ENCODE measurements at regions of chr2 and their contacts with region 1.

Region 1: GRCh38 chr2:27356382-27357181 is at the start of gene GTF3C2:
- DNase-seq: peak; percentile 98
- H3K4me3 ChIP-seq: peak within 1 kb of the TSS; percentile 40 to 90 (median 63)
- H3K27ac ChIP-seq: peak within 1 kb of the TSS; percentile 83
- H3K4me1 ChIP-seq: peaks cover 16% of the 10 kb centered on the region
- H3K27me3 ChIP-seq: no peaks in the 10 kb centered on the region
- CTCF ChIP-seq: no peak
- POLR2A ChIP-seq: no peak
- total RNA-seq, gene GTF3C2: 57.4 and 63.2 TPM in 2 replicates

Region 2: DNA sequence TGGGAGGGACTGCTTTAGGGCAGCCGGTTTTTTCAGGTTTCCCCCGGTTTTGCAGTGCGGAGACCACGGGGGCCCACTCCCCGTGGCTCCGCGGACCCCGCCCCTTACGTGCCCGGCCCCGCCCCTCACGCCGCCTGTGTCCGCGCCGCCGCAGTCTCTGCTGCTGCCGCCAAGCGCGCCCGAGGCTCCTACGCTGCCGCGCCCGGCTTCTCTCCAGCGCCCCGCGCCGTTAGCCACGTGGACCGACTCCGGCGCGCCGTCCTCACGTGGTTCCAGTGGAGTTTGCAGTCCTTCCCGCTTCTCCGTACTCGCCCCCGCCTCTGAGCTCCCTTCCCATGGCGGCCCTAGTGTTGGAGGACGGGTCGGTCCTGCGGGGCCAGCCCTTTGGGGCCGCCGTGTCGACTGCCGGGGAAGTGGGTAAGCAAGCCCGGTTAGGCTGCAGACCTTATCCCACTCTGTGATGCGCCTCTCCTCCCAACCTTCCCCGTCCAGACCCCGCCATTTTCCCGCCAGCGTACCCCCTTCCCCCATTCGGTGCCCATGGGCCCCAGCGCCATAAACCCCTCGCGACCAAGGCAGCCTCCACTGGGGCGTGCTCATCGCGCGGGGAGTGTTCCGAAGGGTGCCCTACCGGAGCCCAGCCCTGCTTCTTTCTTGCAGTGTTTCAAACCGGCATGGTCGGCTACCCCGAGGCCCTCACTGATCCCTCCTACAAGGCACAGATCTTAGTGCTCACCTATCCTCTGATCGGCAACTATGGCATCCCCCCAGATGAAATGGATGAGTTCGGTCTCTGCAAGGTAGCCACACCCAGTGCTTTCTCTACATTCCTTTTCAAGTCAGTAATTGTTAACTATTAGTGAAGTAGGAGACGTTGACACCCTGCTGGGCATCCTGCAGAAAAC is 139.1 kb before region 1 on chr2 and contains the start of gene CAD:
- CTCF ChIA-PET with region 1: no interaction called
- POLR2A ChIA-PET with region 1: no interaction called
- dilution Hi-C with region 1: no loop called
- intact Hi-C with region 1: loop called (anchors 2 kb)
- DNase-seq: peak; percentile 93
- H3K4me3 ChIP-seq: peak within 1 kb of the TSS; percentile 69 to 86 (median 75)
- H3K27ac ChIP-seq: peak within 1 kb of the TSS; percentile 54
- H3K4me1 ChIP-seq: peaks cover 25% of the 10 kb centered on the region
- H3K27me3 ChIP-seq: no peaks in the 10 kb centered on the region
- CTCF ChIP-seq: peak in 1 of 2 donors; percentile 32
- POLR2A ChIP-seq: peak; percentile 85
- total RNA-seq, gene CAD: 81.0 and 91.4 TPM in 2 replicates

Region 3: GRCh38 chr2:27322766-27323595 is 33.6 kb before region 1 on chr2 and contains the start of gene MPV17:
- CTCF ChIA-PET with region 1: interaction called, 5 read pairs
- POLR2A ChIA-PET with region 1: interaction called, 4 read pairs
- dilution Hi-C with region 1: no loop called
- intact Hi-C with region 1: loop called (anchors 1 kb)
- DNase-seq: peak; percentile 90
- H3K4me3 ChIP-seq: peak within 1 kb of the TSS; percentile 70 to 91 (median 90)
- H3K27ac ChIP-seq: peak within 1 kb of the TSS; percentile 95
- H3K4me1 ChIP-seq: peaks cover 26% of the 10 kb centered on the region
- H3K27me3 ChIP-seq: no peaks in the 10 kb centered on the region
- CTCF ChIP-seq: no peak
- POLR2A ChIP-seq: peak; percentile 98
- total RNA-seq, gene MPV17: 66.5 and 74.7 TPM in 2 replicates

Region 4: DNA sequence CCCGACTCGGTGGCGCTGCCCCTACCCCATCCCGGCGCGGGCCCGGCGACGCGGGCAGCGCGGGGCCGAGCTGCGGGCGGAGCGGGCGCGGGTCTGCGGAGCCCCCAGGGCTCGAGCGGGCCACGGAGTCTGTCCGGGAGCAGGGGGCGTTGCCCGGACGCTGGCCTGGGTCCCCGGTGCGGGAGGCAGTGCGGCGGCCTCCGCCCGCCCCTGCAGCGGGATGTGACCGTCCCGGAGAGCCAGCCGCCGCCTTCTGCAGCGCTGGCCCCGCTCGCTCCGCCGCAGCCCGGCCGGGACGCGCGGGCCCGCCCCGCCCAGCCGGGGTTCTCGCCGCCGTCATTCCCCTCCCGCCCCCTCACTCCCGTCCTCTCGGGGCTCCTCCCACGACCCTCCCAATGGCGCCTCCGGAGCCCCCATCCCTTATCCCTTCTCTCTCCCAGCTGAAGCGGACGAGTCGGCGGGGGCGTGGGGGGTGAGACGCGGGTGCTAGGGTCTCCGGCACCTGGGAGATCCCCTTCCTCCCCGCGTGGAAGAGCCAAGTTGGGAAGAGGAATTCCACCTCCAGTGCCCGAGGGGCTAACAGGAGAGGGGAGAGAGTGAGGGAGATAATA is 138.5 kb after region 1 on chr2 and contains the start of gene FNDC4:
- CTCF ChIA-PET with region 1: no interaction called
- POLR2A ChIA-PET with region 1: no interaction called
- dilution Hi-C with region 1: no loop called
- intact Hi-C with region 1: no loop called
- DNase-seq: peak; percentile 37
- H3K4me3 ChIP-seq: peak within 1 kb of the TSS; percentile 78 to 89 (median 85)
- H3K27ac ChIP-seq: peak within 1 kb of the TSS; percentile 8
- H3K4me1 ChIP-seq: peaks cover 18% of the 10 kb centered on the region
- H3K27me3 ChIP-seq: no peaks in the 10 kb centered on the region
- CTCF ChIP-seq: no peak
- POLR2A ChIP-seq: peak; percentile 73
- total RNA-seq, gene FNDC4: 15.5 and 20.0 TPM in 2 replicates

Measured in endothelial cell of umbilical vein (primary cell).